A673 (cell line): ENCODE measurements at regions of chr11 and their contacts with region 1.

Region 1: DNA sequence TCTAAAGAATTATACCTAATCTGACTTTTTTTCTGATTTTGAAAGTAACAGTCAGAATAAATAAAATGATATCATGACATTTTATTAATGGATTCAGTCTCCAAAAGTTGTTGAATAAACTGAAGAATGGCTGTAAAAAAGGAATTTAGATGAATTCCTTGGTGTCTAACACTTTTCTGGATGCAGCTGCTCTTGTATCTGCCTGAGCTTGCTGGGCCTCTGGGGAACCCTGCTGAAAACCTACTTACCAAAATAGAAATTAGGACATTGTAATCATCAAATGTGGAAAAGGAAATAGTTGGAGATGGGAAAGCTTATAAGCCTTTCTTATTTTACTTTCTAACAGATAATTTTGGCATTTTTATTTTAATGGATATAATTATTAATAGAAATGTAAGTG is 315.7 kb upstream of the ANO5 start:
- DNase-seq: no peak
- H3K4me3 ChIP-seq: no peak overlapping the region
- H3K27ac ChIP-seq: no peak overlapping the region
- H3K4me1 ChIP-seq: peaks cover 30% of the 10 kb centered on the region
- H3K27me3 ChIP-seq: no peaks in the 10 kb centered on the region
- CTCF ChIP-seq: no peak

Region 2: GRCh38 chr11:21909152-21909551 is 32.0 kb after region 1 on chr11:
- CTCF ChIA-PET with region 1: no interaction called
- POLR2A ChIA-PET with region 1: no interaction called
- intact Hi-C with region 1: loop called (anchors 2 kb)
- DNase-seq: peak; percentile 42
- H3K4me3 ChIP-seq: no peak overlapping the region
- H3K27ac ChIP-seq: peak overlapping the region; percentile 77
- H3K4me1 ChIP-seq: peaks cover 81% of the 10 kb centered on the region
- H3K27me3 ChIP-seq: no peaks in the 10 kb centered on the region
- CTCF ChIP-seq: no peak

Region 3: GRCh38 chr11:21988477-21988876 is 111.3 kb after region 1 on chr11:
- CTCF ChIA-PET with region 1: interaction called, 9 read pairs
- POLR2A ChIA-PET with region 1: no interaction called
- intact Hi-C with region 1: loop called (anchors 10 kb)
- DNase-seq: peak; percentile 61
- H3K4me3 ChIP-seq: no peak overlapping the region
- H3K27ac ChIP-seq: no peak overlapping the region
- H3K4me1 ChIP-seq: peaks cover 19% of the 10 kb centered on the region
- H3K27me3 ChIP-seq: no peaks in the 10 kb centered on the region
- CTCF ChIP-seq: peak; percentile 50